K562 (cell line): ENCODE measurements at regions of chr10 and their contacts with region 1.

Region 1: GRCh38 chr10:63133056-63133820 is at the start of gene NRBF2:
- DNase-seq: peak; percentile 97 to 100 (median 98)
- ATAC-seq: peak; percentile 97
- H3K4me3 ChIP-seq: peak within 1 kb of the TSS; percentile 90
- H3K27ac ChIP-seq: peak within 1 kb of the TSS; percentile 92
- H3K4me1 ChIP-seq: peaks cover 8 to 9% of the 10 kb centered on the region in 2 experiments; a peak in 3 of 5 replicates
- H3K27me3 ChIP-seq: no peaks in the 10 kb centered on the region
- CTCF ChIP-seq: peak in 2 of 3 experiments; percentile 46 to 55; a peak in 4 of 6 replicates
- EP300 ChIP-seq: no peak
- POLR2A ChIP-seq: peak; percentile 98
- RAD21 ChIP-seq: peak; percentile 10 to 34; a peak in 2 of 4 replicates
- polyA plus RNA-seq, gene NRBF2: 38.1 to 52.1 TPM

Region 2: GRCh38 chr10:63106111-63106755 is 27.0 kb before region 1 on chr10:
- CTCF ChIA-PET with region 1: no interaction called
- POLR2A ChIA-PET with region 1: interaction called, 14 read pairs
- in situ Hi-C with region 1: no loop called
- intact Hi-C with region 1: no loop called
- DNase-seq: peak in 1 of 4 experiments; percentile 43
- ATAC-seq: peak; percentile 11
- H3K4me3 ChIP-seq: no peak overlapping the region
- H3K27ac ChIP-seq: peak overlapping the region; percentile 79; the same call in 2 of the 3 replicates
- H3K4me1 ChIP-seq: peaks cover 0 to 39% of the 10 kb centered on the region in 2 experiments; a peak in 3 of 5 replicates
- H3K27me3 ChIP-seq: no peaks in the 10 kb centered on the region
- CTCF ChIP-seq: no peak
- EP300 ChIP-seq: no peak; the same call in 1 of the 2 replicates
- POLR2A ChIP-seq: no peak
- RAD21 ChIP-seq: no peak

Region 3: DNA sequence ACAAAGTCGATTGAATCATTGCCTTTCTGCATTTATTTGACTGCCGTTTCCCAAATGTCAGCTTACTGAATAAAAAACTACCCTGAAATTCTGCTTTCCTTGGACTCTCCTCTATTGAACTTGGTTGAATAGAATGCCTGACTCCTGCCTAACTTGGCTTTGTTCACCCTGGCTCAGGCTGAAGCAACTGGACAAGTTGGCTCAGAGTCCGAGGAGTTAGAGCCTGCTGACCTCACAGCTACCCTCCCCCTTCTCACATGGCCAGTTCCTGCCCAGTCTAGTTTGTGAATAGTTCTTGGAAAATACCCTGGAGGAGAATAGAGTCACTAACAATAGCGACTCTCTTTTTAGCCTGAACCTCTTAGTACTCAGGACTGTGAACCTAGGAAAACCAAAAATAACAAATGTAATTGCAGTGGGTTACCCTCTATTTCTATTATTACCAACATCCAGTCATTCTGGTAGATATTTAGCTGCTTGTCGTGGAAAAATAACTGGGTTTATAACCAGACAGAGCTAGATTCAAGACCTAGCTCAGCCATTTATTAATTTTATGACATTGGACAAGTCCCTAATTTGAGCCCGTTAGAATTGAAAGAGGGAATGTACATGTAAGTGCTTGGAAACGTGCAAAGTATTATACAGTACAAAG is 17.4 kb before region 1 on chr10:
- CTCF ChIA-PET with region 1: no interaction called
- POLR2A ChIA-PET with region 1: interaction called, 30 read pairs
- in situ Hi-C with region 1: no loop called
- intact Hi-C with region 1: no loop called
- DNase-seq: peak in 3 of 4 experiments; percentile 24 to 66 (median 56)
- ATAC-seq: peak; percentile 84
- H3K4me3 ChIP-seq: no peak overlapping the region
- H3K27ac ChIP-seq: peak overlapping the region; percentile 58; the same call in 2 of the 3 replicates
- H3K4me1 ChIP-seq: peaks cover 0 to 19% of the 10 kb centered on the region in 2 experiments; a peak in 4 of 5 replicates
- H3K27me3 ChIP-seq: no peaks in the 10 kb centered on the region
- CTCF ChIP-seq: no peak
- EP300 ChIP-seq: peak; percentile 59; the same call in 1 of the 2 replicates
- POLR2A ChIP-seq: no peak
- RAD21 ChIP-seq: peak in 1 of 2 experiments; percentile 15; a peak in 1 of 4 replicates

Region 4: GRCh38 chr10:63145782-63146181 is 12.5 kb after region 1 on chr10:
- CTCF ChIA-PET with region 1: no interaction called
- POLR2A ChIA-PET with region 1: interaction called, 12 read pairs
- in situ Hi-C with region 1: no loop called
- intact Hi-C with region 1: no loop called
- DNase-seq: no peak
- ATAC-seq: peak; percentile 32; the same call in 1 of the 3 replicates
- H3K4me3 ChIP-seq: no peak overlapping the region
- H3K27ac ChIP-seq: no peak overlapping the region
- H3K4me1 ChIP-seq: no peaks in the 10 kb centered on the region
- H3K27me3 ChIP-seq: no peaks in the 10 kb centered on the region
- CTCF ChIP-seq: no peak
- EP300 ChIP-seq: no peak
- POLR2A ChIP-seq: no peak
- RAD21 ChIP-seq: no peak

Region 5: DNA sequence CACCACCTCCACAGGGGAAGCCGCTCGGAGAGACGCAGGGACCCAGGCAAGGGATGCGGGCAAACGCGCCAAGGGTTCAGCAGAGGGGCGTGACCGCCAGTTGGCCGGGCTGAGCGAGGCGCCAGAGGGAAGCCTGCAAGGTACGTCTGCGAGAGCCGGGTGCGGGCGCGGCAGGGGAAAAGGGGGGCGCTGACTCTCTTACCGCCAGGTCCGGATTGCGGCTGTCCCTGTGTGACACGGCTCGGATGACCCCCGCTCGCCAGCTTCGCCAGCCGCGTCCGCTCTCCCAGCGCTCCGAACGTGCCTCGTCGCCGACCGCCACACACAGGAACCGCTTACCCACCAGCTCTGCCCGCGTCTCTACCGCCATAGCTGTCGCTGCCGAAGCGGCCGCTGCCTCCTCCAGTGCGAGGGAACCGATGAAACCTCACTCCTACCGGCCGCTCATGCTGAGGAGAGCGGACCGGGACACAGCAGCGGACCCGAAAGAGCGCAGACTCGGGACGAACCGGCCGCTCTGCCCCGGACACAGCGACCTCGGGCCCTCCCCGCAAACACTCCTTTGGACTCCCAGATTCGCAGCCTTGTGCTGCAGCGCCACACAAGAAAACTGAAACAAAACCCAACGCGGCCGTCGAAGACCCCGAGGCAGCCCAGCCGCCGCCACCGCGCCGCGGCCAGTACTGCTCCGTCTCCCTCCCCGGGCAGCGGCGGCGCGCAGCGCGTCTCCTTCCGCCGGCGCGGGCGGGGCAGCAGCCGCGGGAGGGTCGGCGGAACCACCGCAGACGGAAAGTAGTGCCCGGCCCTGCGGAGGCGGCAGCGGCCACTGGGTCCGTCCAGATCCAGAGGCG is 332.3 kb after region 1 on chr10 and contains the start of gene JMJD1C:
- CTCF ChIA-PET with region 1: no interaction called
- POLR2A ChIA-PET with region 1: no interaction called
- in situ Hi-C with region 1: no loop called
- intact Hi-C with region 1: no loop called
- DNase-seq: peak; percentile 82 to 87 (median 84)
- ATAC-seq: peak; percentile 83
- H3K4me3 ChIP-seq: peak within 1 kb of the TSS; percentile 73
- H3K27ac ChIP-seq: peak within 1 kb of the TSS; percentile 89
- H3K4me1 ChIP-seq: peaks cover 0 to 19% of the 10 kb centered on the region in 2 experiments; a peak in 4 of 5 replicates
- H3K27me3 ChIP-seq: no peaks in the 10 kb centered on the region
- CTCF ChIP-seq: peak in 2 of 3 experiments; percentile 1 to 24; a peak in 2 of 6 replicates
- EP300 ChIP-seq: no peak
- POLR2A ChIP-seq: peak; percentile 86
- RAD21 ChIP-seq: peak in 1 of 2 experiments; percentile 10; a peak in 3 of 4 replicates
- polyA plus RNA-seq, gene JMJD1C: 25.3 to 38.5 TPM